SK-N-SH (cell line): ENCODE measurements at regions of chr2 and their contacts with region 1.

Region 1: DNA sequence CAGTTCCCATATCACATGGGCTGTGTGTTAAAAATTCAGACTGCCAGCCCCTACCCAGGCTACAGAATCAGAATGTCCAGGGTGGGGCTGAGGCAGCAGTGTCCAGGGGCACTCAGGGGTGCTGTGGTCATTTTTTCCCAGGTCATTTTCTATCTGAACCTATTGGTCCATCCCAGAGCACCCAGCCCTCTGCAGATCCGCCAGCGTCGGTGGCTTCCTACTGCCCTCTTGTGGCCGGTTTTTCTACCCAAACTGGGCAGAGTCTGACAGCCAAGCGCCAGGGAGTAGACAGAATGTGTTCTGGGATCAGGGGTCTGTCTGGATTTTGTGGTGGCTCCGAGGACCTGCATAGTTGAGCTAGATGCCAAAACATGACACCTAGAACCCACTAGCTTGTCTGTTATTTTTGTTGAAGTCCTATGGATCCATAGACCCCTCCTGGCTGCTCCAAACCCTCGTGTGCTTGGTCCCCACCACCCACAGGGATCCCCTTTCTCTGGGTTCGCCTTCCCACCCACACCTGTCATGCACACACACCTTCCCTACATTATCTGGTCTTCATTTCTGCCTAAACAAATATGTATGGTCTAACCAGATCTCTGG is 34.1 kb upstream of the RMDN2 start:
- DNase-seq: peak; percentile 85
- H3K4me3 ChIP-seq: no peak overlapping the region
- H3K27ac ChIP-seq: no peak overlapping the region; a peak in 1 of 4 replicates
- H3K4me1 ChIP-seq: peaks cover 6 to 8% of the 10 kb centered on the region in 2 experiments; a peak in 3 of 4 replicates
- H3K27me3 ChIP-seq: no peaks in the 10 kb centered on the region
- CTCF ChIP-seq: peak; percentile 95
- EP300 ChIP-seq: no peak
- RAD21 ChIP-seq: peak; percentile 95

Region 2: GRCh38 chr2:37871456-37872191 is 19.4 kb before region 1 on chr2:
- CTCF ChIA-PET with region 1: interaction called, 97 read pairs
- POLR2A ChIA-PET with region 1: no interaction called
- DNase-seq: no peak
- H3K4me3 ChIP-seq: no peak overlapping the region
- H3K27ac ChIP-seq: peak overlapping the region; percentile 63 to 96
- H3K4me1 ChIP-seq: peaks cover 20 to 47% of the 10 kb centered on the region in 2 experiments; a peak in 3 of 4 replicates
- H3K27me3 ChIP-seq: no peaks in the 10 kb centered on the region
- CTCF ChIP-seq: no peak
- EP300 ChIP-seq: no peak
- RAD21 ChIP-seq: no peak

Region 3: GRCh38 chr2:37902991-37903390 is 12.0 kb after region 1 on chr2:
- CTCF ChIA-PET with region 1: interaction called, 21 read pairs
- POLR2A ChIA-PET with region 1: interaction called, 3 read pairs
- DNase-seq: no peak
- H3K4me3 ChIP-seq: no peak overlapping the region
- H3K27ac ChIP-seq: no peak overlapping the region
- H3K4me1 ChIP-seq: no peaks in the 10 kb centered on the region; a peak in 1 of 4 replicates
- H3K27me3 ChIP-seq: no peaks in the 10 kb centered on the region
- CTCF ChIP-seq: no peak
- EP300 ChIP-seq: no peak
- RAD21 ChIP-seq: no peak

Region 4: GRCh38 chr2:37947306-37947705 is 56.3 kb after region 1 on chr2:
- CTCF ChIA-PET with region 1: no interaction called
- POLR2A ChIA-PET with region 1: no interaction called
- DNase-seq: no peak
- H3K4me3 ChIP-seq: no peak overlapping the region
- H3K27ac ChIP-seq: no peak overlapping the region
- H3K4me1 ChIP-seq: no peaks in the 10 kb centered on the region; a peak in 1 of 4 replicates
- H3K27me3 ChIP-seq: no peaks in the 10 kb centered on the region
- CTCF ChIP-seq: no peak
- EP300 ChIP-seq: no peak
- RAD21 ChIP-seq: no peak

Region 5: DNA sequence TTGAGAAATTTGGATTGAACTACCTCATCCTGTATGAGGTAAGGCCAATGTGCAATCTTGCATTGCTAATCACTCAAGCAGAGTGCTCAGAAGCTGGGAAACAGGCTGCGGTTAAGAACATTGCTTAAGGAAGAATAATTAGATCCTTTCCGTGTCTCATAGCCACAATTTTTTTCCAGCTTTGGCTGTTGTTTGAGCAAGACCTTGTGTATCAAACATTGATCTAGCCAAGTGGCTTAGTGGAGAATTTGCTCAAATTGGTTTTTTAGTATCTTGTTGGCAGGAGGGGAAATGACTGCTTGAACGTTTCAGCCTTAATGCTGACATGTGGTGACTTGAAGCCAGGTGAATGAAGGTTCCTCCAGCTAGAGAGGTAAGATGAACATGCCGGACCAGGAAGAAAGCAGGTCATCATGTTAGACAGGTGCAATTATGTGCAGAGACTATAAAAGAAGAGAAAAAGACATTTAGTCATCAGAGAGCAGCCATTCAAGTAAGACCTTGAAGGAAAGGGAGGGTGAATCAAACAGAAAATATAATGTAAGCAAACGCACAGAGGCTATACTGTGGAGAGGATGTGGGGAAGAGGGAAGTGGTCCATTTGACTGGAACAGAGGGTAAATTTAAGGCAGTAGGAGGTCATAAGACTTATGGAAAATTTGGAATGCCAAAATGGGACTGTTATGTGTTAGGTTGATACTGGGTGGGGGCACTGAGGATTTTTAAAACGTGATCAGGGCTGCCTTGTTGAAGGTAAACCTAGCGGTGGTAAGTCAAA is 283.8 kb after region 1 on chr2:
- CTCF ChIA-PET with region 1: no interaction called
- POLR2A ChIA-PET with region 1: no interaction called
- DNase-seq: no peak
- H3K4me3 ChIP-seq: no peak overlapping the region
- H3K27ac ChIP-seq: no peak overlapping the region
- H3K4me1 ChIP-seq: peaks cover 0 to 5% of the 10 kb centered on the region in 2 experiments; a peak in 1 of 4 replicates
- H3K27me3 ChIP-seq: no peaks in the 10 kb centered on the region
- CTCF ChIP-seq: no peak
- EP300 ChIP-seq: no peak
- RAD21 ChIP-seq: no peak

Region 6: DNA sequence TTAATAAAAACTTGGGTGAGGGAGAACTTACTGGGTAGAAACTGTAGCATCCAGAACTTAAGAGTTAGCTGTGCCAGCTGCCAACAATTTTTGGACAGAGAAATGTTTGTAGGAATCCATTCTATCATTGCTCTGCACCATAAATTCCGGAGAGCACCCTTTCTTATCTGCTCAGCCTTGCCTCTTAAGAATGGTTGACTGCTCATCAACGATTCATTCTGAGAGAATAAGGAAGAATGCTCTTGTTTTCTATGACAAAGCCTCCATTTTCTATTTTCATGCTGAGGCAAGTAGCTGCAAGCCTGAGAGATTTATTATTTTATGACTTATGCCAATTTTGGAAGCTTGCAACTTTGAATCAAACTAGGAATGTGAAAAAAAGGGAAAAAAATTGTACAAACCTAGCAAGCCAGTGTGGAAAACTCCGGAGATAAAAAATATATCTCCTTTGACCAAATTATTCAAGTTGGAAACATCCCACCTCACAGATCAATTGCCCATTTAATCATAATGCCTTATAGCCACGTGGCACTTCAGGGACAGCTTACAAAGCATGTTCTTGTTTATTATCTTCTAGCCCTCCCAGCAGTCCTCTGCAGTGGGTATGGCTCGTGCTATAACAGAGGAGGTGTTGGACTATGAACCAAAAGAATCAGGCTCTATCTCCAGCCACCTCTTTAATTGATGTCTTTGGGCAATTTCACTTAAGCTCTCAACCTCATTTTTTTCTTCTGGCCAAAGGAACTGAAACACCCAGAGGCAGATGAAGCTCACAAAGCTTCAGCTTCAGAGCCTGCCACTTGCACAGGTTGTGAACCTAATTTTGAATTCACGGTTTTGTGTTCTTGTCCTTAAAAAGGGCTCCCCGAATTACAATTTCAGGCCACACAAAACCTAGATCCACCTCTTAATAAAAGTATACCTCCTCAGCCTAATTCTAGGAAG is 527.0 kb after region 1 on chr2:
- CTCF ChIA-PET with region 1: no interaction called
- POLR2A ChIA-PET with region 1: no interaction called
- DNase-seq: no peak
- H3K4me3 ChIP-seq: no peak overlapping the region
- H3K27ac ChIP-seq: no peak overlapping the region
- H3K4me1 ChIP-seq: peaks cover 0 to 5% of the 10 kb centered on the region in 2 experiments; a peak in 1 of 4 replicates
- H3K27me3 ChIP-seq: peaks cover 9% of the 10 kb centered on the region; the same call in 1 of the 2 replicates
- CTCF ChIP-seq: no peak
- EP300 ChIP-seq: no peak
- RAD21 ChIP-seq: no peak